H1 (cell line): ENCODE measurements at regions of chrX and their contacts with region 1.

Region 1: DNA sequence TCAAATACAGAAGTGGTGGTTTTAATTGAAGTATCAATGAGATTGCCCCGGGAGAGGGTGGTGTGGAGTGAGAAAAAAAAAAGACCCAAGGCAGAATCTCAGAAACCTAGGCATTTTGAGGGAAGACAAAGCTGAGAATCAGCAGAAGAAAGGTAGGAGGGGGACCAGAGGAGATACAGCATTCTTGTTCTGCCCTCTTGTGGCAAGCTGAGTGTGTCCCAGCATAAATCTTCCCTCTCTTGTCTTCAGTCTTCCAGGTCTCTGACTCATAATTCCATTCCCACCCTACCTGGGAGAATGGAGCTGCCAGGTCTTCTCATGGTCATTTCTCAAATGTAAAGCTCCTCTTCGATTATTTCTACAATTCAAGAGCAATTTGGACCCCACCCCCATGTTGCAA is 32.7 kb upstream of the MAGED1 start:
- DNase-seq: no peak
- H3K4me3 ChIP-seq: no peak overlapping the region
- H3K27ac ChIP-seq: no peak overlapping the region
- H3K4me1 ChIP-seq: no peaks in the 10 kb centered on the region; a peak in 1 of 7 replicates
- H3K27me3 ChIP-seq: no peaks in the 10 kb centered on the region
- CTCF ChIP-seq: peak in 2 of 3 experiments; percentile 59 to 67; a peak in 3 of 4 replicates
- EP300 ChIP-seq: no peak
- POLR2A ChIP-seq: no peak
- RAD21 ChIP-seq: peak; percentile 80 to 85

Region 2: GRCh38 chrX:51641421-51642021 is 219.2 kb before region 1 on chrX:
- CTCF ChIA-PET with region 1: interaction called, 21 read pairs
- POLR2A ChIA-PET with region 1: no interaction called
- DNase-seq: no peak
- H3K4me3 ChIP-seq: no peak overlapping the region
- H3K27ac ChIP-seq: no peak overlapping the region
- H3K4me1 ChIP-seq: no peaks in the 10 kb centered on the region
- H3K27me3 ChIP-seq: no peaks in the 10 kb centered on the region
- CTCF ChIP-seq: peak in 2 of 3 experiments; percentile 40 to 64; a peak in 2 of 4 replicates
- EP300 ChIP-seq: no peak
- POLR2A ChIP-seq: no peak
- RAD21 ChIP-seq: peak; percentile 81 to 89

Region 3: DNA sequence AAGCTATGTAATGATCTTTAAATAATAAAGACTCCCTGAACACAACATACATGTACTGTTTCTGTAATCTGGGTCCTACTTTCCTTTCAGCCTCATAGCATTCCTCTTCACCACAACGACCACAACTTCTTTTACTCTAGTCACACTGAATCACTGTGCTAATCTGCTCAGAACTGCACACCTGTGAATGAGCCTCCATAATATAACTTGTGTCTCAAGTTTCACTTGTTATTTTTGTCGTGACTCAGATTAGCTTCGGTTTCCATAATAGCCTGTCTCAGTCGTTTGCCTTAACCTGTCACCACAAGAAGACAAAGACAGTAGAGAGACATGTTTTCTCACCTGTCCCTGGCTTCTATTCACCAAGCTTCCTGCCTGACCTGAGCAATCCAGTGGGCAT is 94.5 kb after region 1 on chrX:
- CTCF ChIA-PET with region 1: no interaction called
- POLR2A ChIA-PET with region 1: no interaction called
- DNase-seq: no peak
- H3K4me3 ChIP-seq: no peak overlapping the region
- H3K27ac ChIP-seq: no peak overlapping the region
- H3K4me1 ChIP-seq: no peaks in the 10 kb centered on the region
- H3K27me3 ChIP-seq: no peaks in the 10 kb centered on the region
- CTCF ChIP-seq: no peak
- EP300 ChIP-seq: no peak
- POLR2A ChIP-seq: no peak
- RAD21 ChIP-seq: no peak